Mammary epithelial cell (primary cell): ENCODE measurements at regions of chr16 and their contacts with region 1.

Region 1: DNA sequence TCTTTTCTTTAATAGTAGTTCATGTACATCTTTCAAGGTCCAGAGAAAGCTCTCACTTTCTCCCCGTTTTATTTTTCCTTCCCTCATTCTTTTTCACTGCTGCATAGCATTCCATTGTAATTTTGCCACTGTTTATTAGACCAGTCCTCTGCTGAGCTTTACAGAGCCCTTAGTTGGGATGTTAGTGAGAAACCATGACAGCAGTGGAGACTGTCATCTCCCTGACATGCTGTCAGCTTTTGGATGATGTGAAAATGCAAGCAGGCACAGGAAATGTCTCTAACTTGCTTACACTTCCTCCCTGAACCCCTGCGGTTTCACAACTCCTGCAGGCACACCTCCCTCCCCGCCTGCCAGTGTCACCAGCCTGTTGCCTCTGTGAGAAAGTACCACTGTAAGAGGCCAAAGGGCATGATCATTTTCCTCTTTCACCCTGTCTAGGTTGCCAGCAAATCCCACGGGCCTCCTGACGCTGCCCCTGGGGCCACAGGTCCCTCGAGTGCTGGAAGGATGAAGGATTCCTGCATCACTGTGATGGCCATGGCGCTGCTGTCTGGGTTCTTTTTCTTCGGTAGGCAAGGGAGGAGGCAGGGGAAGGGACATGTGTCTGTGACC is at the start of gene ITGAL:
- DNase-seq: no peak
- H3K4me3 ChIP-seq: no peak within 1 kb of the TSS
- H3K27ac ChIP-seq: no peak within 1 kb of the TSS
- H3K4me1 ChIP-seq: peaks cover 4% of the 10 kb centered on the region
- H3K27me3 ChIP-seq: peaks cover 2% of the 10 kb centered on the region
- CTCF ChIP-seq: no peak
- total RNA-seq, gene ITGAL: not detected

Region 2: GRCh38 chr16:30526823-30527635 is 54.6 kb after region 1 on chr16:
- CTCF ChIA-PET with region 1: no interaction called
- dilution Hi-C with region 1: no loop called
- in situ Hi-C with region 1: no loop called
- intact Hi-C with region 1: loop called (anchors 1 kb)
- DNase-seq: peak; percentile 98
- H3K4me3 ChIP-seq: peak overlapping the region; percentile 65 to 96 (median 90)
- H3K27ac ChIP-seq: peak overlapping the region; percentile 88
- H3K4me1 ChIP-seq: peaks cover 18% of the 10 kb centered on the region
- H3K27me3 ChIP-seq: no peaks in the 10 kb centered on the region
- CTCF ChIP-seq: peak in 1 of 2 donors; percentile 42